Activated T-helper 2 cell treated with anti-CD3 and anti-CD28 coated beads, Interferon-gamma antibody, Interleukin-2, Interleukin-4, amounts not matched to agents 10 μg/mL and 5 μg/mL and 100 μg/mL, durations not matched to agents 14 hours and 24 hours and 36 hours (primary cell): ENCODE measurements at regions of chr10 and their contacts with region 1.

Region 1: DNA sequence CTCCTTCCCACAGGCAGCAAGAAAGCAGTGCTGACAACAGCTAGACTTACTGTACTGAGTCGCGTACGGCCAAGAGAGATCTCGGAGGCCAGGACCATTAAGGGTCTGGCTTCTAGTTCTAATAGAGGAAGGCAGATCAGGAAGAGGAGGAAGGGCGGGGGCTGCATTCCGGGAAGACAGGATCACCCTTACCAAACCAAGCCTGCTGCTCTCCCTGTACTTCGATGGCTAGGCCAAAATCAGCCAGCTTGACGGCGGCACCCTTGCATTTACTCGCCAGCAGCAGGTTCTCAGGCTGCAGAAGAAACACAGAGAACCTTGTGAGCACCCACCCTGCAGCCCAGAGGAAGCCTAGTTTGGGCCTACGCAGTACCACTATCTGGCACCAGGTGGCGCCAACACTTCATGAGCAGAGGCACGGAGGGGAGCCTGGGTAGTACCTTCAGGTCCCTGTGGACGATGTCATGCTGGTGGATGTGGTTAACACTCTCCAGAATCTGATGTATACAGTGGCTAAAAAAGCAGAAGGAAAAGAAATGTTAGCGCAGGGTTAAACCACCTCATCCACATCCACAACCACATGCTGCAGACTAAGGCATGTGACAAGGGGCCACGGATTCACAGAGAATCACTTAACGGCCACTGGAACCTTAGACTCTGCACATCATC is 25.4 kb downstream of the CAMK2G start:
- DNase-seq: peak; percentile 87
- H3K4me3 Mint-ChIP-seq: peak overlapping the region; percentile 14
- H3K27ac Mint-ChIP-seq: peak overlapping the region; percentile 77
- H3K4me1 Mint-ChIP-seq: peaks cover 11% of the 10 kb centered on the region
- H3K27me3 Mint-ChIP-seq: no peaks in the 10 kb centered on the region

Region 2: GRCh38 chr10:73879296-73880173 is 30.6 kb after region 1 on chr10:
- intact Hi-C with region 1: loop called (anchors 1 kb)
- DNase-seq: peak; percentile 92
- H3K4me3 Mint-ChIP-seq: no peak overlapping the region
- H3K27ac Mint-ChIP-seq: peak overlapping the region; percentile 35
- H3K4me1 Mint-ChIP-seq: peaks cover 37% of the 10 kb centered on the region
- H3K27me3 Mint-ChIP-seq: no peaks in the 10 kb centered on the region

Region 3: DNA sequence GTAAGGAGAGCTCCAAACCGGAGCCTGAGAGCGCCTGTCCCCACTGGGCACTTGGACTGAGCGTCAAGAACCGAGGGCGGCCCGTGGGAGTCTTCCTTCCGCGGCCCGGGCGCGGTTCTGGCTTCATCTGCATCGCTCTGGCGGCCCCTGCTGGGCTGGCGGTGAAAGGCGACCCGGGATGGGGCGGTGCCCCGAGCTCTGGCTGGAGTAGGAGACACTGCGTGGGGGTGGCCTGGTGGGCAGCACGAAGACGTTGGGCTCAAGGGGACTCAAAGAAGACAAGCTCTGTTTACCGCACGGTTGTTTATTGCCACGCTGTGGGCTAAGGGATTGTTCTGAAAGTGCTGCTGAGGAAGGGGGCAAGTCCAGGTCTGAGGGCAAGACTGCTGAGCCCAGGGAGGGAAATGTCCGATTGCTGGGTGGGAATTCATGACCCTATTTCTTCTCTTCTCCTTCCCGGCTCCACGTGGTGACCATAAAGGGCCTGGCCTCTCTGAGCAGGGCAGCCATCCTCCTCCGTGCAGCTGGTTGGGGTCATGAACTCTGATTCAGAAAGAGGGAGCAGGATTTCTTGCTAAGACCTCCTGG is 91.8 kb after region 1 on chr10:
- intact Hi-C with region 1: loop called (anchors 5 kb)
- DNase-seq: peak; percentile 80
- H3K4me3 Mint-ChIP-seq: no peak overlapping the region
- H3K27ac Mint-ChIP-seq: no peak overlapping the region
- H3K4me1 Mint-ChIP-seq: peaks cover 10% of the 10 kb centered on the region
- H3K27me3 Mint-ChIP-seq: peaks cover 6% of the 10 kb centered on the region